Esophagus muscularis mucosa (tissue), 4 donors: ENCODE measurements at regions of chr17 and their contacts with region 1.

Region 1: DNA sequence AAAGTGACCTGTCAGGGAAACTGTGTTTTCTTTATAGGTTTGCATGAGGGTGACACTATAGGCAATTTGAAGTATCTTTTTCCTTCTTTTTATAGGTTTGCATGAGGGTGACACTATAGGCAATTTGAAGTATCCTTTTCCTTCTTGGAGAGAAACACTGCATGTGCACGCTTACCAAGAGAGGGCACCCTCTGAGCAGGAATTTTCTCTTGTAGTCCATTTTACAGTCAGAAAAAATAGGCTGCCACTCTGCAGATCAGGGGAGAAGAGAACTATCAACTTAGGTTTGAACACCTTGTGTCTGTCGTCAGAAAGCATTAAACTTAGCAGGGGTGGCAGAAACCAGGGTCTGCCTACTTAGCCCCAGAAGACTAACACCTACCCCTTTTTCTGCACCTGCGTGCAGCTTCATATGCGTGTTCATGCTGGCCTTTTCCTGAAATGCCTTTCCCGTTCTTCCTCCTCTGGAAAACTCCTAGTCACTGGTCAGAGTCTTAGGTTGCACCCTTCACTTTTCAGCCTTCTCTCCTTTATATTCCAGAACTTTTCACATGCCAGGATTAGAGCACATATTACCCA is 16.4 kb upstream of the SMIM36 start:
- DNase-seq: no peak
- H3K4me3 ChIP-seq: no peak overlapping the region
- H3K27ac ChIP-seq: no peak overlapping the region
- H3K4me1 ChIP-seq: peaks cover 0 to 4% (median 0%) of the 10 kb centered on the region in 4 donors
- H3K27me3 ChIP-seq: no peaks in the 10 kb centered on the region
- CTCF ChIP-seq: peak; percentile 45 to 53 (median 46)
- EP300 ChIP-seq: no peak
- POLR2A ChIP-seq: no peak

Region 2: GRCh38 chr17:55437159-55437605 is 90.4 kb before region 1 on chr17:
- intact Hi-C with region 1: no loop called
- DNase-seq: no peak
- H3K4me3 ChIP-seq: no peak overlapping the region
- H3K27ac ChIP-seq: peak overlapping the region in 3 of 4 donors; percentile 26 to 46 (median 30)
- H3K4me1 ChIP-seq: peaks cover 6 to 60% (median 53%) of the 10 kb centered on the region in 4 donors
- H3K27me3 ChIP-seq: no peaks in the 10 kb centered on the region
- CTCF ChIP-seq: no peak
- EP300 ChIP-seq: no peak
- POLR2A ChIP-seq: no peak

Region 3: DNA sequence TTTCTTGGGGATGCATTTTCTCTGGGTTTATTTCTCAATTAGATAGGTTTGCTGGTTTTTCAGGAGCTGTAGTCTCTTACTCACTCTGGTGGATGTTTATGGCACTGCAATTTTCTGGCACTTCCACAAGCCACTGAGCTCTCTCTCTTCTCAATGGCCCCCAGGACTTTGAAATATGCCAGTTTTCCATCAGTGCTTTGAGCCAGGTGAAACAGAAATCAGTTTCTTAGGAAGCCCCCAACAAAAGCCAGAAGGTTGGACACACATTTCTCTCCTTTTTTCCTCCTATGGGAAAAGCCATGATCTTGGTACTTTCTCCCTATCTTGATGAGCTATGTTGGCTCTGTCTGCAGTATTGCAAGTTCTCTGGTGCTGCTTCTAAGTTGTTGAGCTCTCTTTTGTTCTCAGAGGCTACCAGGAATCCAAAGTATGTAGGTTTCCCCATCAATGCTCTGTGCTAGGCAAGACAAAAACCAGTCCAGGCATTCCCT is 74.3 kb after region 1 on chr17:
- intact Hi-C with region 1: loop called (anchors 5 kb)
- DNase-seq: no peak
- H3K4me3 ChIP-seq: no peak overlapping the region
- H3K27ac ChIP-seq: no peak overlapping the region
- H3K4me1 ChIP-seq: peaks cover 0 to 6% (median 2%) of the 10 kb centered on the region in 4 donors
- H3K27me3 ChIP-seq: no peaks in the 10 kb centered on the region
- CTCF ChIP-seq: peak; percentile 37 to 50 (median 40)
- EP300 ChIP-seq: no peak
- POLR2A ChIP-seq: no peak

Region 4: GRCh38 chr17:55625521-55625920 is 97.9 kb after region 1 on chr17:
- intact Hi-C with region 1: no loop called
- DNase-seq: no peak
- H3K4me3 ChIP-seq: no peak overlapping the region
- H3K27ac ChIP-seq: no peak overlapping the region
- H3K4me1 ChIP-seq: no peaks in the 10 kb centered on the region
- H3K27me3 ChIP-seq: no peaks in the 10 kb centered on the region
- CTCF ChIP-seq: no peak
- EP300 ChIP-seq: no peak
- POLR2A ChIP-seq: no peak

Region 5: GRCh38 chr17:55641676-55642081 is 114.0 kb after region 1 on chr17:
- intact Hi-C with region 1: loop called (anchors 5 kb)
- DNase-seq: no peak
- H3K4me3 ChIP-seq: no peak overlapping the region
- H3K27ac ChIP-seq: no peak overlapping the region
- H3K4me1 ChIP-seq: no peaks in the 10 kb centered on the region
- H3K27me3 ChIP-seq: no peaks in the 10 kb centered on the region
- CTCF ChIP-seq: peak; percentile 33 to 51 (median 47)
- EP300 ChIP-seq: no peak
- POLR2A ChIP-seq: no peak

Region 6: DNA sequence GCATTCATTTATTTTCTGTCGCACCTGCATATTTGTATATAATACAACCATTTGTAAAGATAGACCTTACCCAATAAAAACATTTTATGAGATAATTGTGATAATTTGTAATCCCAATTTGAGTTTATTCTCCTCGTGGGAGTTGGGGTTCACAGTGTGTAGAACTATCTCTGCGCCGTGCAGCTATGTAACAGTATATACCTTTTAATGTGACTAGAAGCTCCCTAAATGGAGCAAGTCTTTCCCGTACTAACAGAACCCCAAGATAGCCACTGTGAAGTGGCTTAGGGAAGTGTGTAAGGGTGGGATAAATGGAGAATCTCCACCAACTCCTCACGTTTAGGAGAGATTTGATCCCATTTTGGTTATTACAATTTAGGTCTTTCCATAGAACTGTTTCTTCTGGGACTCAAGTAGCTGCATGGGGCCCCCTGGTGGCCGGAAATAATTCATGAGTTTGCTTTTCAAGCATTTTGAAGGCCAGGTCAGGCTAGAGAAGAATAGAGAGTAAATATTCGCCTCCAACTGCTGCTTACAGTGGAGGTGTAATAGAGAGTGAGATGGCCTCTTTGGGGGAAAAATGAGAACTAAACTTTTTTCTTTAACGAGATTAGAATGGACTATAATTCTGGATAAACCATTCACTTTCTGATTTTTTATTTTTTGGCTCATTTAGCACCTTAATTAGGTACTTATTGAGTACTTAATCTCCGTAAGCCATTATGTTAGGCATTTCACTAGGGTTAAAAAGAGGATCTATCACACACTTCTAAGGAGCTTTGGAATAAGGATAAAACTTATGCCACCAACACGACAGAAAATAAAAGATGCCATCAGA is 190.5 kb after region 1 on chr17:
- intact Hi-C with region 1: loop called (anchors 2 kb)
- DNase-seq: no peak
- H3K4me3 ChIP-seq: no peak overlapping the region
- H3K27ac ChIP-seq: no peak overlapping the region
- H3K4me1 ChIP-seq: peaks cover 7 to 22% (median 16%) of the 10 kb centered on the region in 4 donors
- H3K27me3 ChIP-seq: no peaks in the 10 kb centered on the region
- CTCF ChIP-seq: peak; percentile 67 to 80 (median 75)
- EP300 ChIP-seq: no peak
- POLR2A ChIP-seq: no peak

Region 7: DNA sequence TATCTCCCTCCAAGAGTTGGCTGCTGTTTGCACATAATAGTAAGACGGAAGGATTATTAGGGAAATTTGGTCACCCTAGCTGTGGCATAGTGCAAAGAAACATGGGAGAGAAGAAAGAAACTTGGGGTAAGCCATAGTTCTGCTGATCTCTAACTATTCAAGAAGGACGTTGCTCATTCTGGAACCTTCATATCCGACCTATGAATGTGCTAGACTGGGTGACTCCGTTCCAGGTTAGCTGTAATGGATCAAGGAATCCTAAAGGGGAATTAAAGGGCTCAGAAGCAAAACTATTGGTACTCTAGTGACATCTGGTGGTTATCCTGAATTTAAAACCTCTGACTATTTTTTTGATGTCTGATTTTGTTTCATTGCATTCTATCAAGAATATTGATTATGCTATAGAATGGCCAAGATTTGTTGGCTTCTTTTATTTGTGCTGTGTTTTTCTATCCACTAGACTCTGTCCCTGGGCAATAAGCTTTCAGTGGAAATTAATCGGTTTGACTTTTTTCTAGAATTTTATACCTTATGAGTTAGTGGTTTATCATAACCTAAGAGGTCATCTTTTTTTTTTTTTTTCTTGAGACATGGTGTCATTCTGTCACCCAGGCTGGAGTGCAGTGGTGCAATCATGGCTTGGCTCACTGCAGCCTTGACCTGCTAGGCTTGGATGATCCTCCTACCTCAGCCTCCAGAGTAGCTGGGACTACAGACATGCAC is 242.7 kb after region 1 on chr17:
- intact Hi-C with region 1: loop called (anchors 2 kb)
- DNase-seq: no peak
- H3K4me3 ChIP-seq: no peak overlapping the region
- H3K27ac ChIP-seq: peak overlapping the region in 2 of 4 donors; percentile 44 to 66
- H3K4me1 ChIP-seq: peaks cover 0 to 22% (median 17%) of the 10 kb centered on the region in 4 donors
- H3K27me3 ChIP-seq: no peaks in the 10 kb centered on the region
- CTCF ChIP-seq: peak; percentile 59 to 70 (median 62)
- EP300 ChIP-seq: no peak
- POLR2A ChIP-seq: no peak